Aorta (tissue), 5 donors: ENCODE measurements at regions of chr17 and their contacts with region 1.

Region 1: DNA sequence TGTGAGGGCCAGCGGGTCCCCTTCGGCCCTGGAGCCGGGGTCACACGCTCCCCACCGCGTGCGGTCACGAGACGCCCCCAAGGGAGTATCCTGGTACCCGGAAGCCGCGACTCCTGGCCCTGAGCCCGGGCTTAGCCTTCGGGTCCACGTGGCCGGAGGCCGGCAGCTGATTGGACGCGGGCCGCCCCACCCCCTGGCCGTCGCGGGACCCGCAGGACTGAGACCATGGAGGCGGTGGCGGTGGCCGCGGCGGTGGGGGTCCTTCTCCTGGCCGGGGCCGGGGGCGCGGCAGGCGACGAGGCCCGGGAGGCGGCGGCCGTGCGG is at the start of gene NAGLU:
- DNase-seq: peak; percentile 99
- ATAC-seq: peak; percentile 93
- H3K4me3 ChIP-seq: peak within 1 kb of the TSS; percentile 77 to 81
- H3K27ac ChIP-seq: peak within 1 kb of the TSS in 1 of 2 donors; percentile 87
- H3K4me1 ChIP-seq: no peaks in the 10 kb centered on the region
- H3K27me3 ChIP-seq: no peaks in the 10 kb centered on the region
- total RNA-seq, gene NAGLU: 38.8 to 41.9 TPM

Region 2: DNA sequence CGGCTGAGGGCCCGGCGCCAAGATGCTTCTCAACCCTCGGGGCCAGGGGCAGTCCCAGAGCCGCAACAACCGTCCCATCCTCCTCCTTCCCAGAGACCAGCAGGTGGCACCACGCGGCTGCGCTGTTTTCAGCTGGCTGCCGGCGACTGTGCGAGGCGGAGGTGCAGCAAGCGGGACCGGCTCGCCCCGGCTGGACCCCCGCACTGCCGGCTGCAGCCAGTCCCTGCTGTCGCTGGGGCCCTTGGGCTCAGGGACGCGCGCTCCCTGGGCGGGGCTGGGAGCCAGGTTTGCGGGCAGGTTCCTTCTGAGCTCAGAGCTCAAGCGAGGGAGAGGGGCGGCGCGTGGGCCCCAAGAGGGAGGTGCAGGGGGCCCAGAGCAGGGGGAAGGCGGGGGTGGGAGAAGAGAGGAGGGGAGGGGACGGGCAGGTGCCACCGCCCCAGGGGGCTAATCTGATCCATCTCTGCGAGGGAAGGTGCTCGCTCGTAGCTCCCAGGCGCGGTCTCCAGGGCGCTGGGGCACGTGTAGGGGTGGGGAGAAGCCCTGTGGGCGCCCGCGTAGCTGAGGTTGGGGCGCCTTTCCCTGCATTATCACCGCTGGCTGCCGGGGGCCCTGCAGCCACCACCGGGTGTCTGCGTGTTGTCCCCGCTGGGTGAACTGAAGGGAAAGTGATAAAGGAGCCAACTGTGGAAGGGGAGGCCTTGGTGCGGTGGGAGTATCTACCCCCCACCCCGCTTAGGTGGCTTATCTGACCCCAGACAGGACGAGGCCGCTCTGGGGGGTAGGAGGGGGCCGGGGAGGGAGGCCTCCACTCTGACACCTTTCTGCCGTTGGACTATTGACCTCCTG is 223.5 kb before region 1 on chr17:
- intact Hi-C with region 1: no loop called
- DNase-seq: peak; percentile 92 to 94
- ATAC-seq: peak; percentile 86
- H3K4me3 ChIP-seq: no peak overlapping the region
- H3K27ac ChIP-seq: peak overlapping the region in 1 of 2 donors; percentile 65
- H3K4me1 ChIP-seq: no peaks in the 10 kb centered on the region
- H3K27me3 ChIP-seq: no peaks in the 10 kb centered on the region

Region 3: DNA sequence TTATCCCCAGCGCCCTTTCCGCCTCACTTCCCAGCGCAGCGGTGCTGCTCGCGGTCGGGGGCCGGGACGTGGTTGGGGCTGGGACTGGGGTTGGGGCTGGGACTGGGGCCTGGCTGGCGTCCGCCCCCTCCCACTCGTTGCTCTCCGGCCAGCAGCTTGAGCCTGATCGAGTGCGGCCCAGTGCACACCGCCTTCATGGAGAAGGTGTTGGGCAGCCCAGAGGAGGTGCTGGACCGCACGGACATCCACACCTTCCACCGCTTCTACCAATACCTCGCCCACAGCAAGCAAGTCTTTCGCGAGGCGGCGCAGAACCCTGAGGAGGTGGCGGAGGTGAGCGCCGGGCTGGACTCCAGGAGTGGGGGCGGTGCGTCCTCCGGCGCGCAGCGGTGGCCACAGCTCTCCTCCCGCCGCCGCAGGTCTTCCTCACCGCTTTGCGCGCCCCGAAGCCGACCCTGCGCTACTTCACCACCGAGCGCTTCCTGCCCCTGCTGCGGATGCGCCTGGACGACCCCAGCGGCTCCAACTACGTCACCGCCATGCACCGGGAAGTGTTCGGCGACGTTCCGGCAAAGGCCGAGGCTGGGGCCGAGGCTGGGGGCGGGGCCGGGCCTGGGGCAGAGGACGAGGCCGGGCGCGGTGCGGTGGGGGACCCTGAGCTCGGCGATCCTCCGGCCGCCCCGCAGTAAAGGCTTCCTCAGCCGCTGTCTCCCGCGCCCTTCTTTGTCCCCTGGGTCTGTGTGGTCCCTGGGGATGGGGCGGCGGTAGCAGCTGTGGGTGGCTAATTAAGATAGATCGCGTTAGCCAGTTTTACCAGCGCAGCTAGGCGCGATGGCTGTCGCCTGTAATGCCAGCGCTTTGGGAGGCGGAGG is 18.5 kb after region 1 on chr17:
- intact Hi-C with region 1: loop called in 1 of 2 experiments (anchors 1 kb)
- DNase-seq: peak; percentile 93 to 96
- ATAC-seq: peak; percentile 95
- H3K4me3 ChIP-seq: peak overlapping the region; percentile 47 to 64
- H3K27ac ChIP-seq: peak overlapping the region in 1 of 2 donors; percentile 53
- H3K4me1 ChIP-seq: no peaks in the 10 kb centered on the region
- H3K27me3 ChIP-seq: no peaks in the 10 kb centered on the region